ENCODE measurements at regions of chr14 and their contacts with region 1.

Region 1: DNA sequence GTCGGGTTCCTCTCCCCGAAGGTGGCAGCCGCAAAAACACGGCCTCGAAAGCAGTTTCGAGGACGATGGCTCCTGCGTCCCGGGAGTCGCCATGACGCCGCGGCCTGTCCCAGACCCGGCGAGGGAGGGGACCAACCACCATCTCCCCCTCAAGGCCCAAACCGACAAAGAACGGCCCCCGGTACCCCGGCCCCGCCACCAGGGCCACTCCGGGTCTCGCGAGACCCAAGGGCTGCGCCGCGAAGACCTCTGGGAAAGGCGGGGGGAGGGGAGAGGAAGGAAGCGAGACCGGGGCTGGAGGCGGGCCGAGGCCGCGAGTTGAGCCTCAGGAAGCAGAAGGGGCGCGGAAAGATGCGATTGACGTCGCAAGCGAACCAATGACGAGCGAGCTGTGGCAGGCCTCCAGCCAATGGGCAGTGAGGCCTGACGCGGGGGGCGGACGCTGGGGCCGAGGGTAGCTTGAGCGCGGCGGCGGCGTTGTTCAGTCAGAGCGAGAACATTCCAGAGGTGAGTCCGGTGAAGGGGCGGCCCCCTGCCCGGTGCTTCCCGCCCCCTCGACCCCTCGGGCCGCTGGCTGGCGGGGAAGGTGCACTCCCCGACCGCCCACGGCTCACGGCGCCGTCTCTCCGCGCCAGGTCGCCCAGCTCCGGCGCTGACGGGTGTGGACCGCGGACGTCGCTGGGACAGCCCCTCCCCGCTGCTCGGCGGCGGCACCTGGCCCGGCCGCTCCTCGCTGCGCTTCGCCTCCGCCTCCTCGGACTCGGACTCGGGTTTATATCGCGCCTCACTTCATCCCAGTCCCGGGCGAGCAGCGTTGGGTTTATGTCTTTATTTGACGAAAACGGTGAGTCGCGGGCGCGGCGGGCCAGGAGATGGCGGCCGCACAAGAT is at the start of gene EIF5:
- DNase-seq: peak; percentile 98
- ATAC-seq: peak; percentile 84
- H3K4me3 Mint-ChIP-seq: peak within 1 kb of the TSS; percentile 91
- H3K27ac Mint-ChIP-seq: peak within 1 kb of the TSS; percentile 93
- H3K4me1 Mint-ChIP-seq: peaks cover 33% of the 10 kb centered on the region
- H3K27me3 Mint-ChIP-seq: no peaks in the 10 kb centered on the region
- CTCF ChIP-seq: no peak
- total RNA-seq, gene EIF5: 234 and 274 TPM in 2 replicates

Region 2: GRCh38 chr14:102591889-102592763 is 741.9 kb before region 1 on chr14 and contains the start of gene RCOR1:
- CTCF ChIA-PET with region 1: no interaction called
- POLR2A ChIA-PET with region 1: no interaction called
- intact Hi-C with region 1: loop called (anchors 1 kb)
- DNase-seq: peak; percentile 94
- ATAC-seq: peak; percentile 84
- H3K4me3 Mint-ChIP-seq: peak within 1 kb of the TSS; percentile 93
- H3K27ac Mint-ChIP-seq: peak within 1 kb of the TSS; percentile 97
- H3K4me1 Mint-ChIP-seq: peaks cover 26% of the 10 kb centered on the region
- H3K27me3 Mint-ChIP-seq: no peaks in the 10 kb centered on the region
- CTCF ChIP-seq: no peak
- total RNA-seq, gene RCOR1: 21.0 and 23.0 TPM in 2 replicates

Region 3: DNA sequence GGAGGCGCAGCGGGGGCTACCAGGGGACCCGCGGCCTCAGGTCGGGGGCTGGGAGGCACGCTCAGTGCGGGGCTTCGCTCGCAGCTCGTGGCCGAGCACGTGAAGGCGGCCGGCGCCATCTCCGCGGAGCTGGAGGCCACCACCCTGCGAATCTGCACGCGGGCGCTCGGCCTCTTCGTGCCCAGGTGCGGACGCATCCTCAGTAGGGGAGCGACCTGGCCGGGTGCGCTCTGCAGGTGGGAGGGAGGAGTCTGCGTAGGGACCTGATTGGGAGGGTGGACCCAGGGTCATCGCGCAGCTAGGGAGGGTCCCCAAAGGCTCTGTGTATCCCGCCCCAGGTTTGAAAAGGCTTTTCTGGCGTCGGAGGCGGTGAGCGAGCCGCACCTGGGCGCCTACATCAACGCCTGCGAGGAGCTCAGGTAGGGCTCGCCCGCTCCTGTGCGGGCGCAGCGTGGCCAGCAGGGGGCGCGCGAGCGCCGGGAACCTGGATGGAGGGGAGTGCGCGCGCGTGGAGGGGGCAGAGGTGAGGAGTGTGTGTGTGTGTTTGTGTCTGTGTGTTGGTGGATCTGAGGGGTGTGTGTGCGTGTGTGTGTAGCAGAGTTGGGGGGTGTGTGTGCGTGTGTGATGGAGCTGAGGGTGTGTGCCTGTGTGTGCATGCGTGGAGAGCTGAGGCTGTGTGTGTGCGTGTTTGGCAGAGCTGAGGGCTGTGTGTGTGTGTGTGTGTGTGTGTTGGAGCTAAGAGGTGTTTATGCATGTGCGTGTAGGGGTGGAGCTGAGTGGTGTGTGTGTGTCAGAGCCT is 229.1 kb before region 1 on chr14:
- CTCF ChIA-PET with region 1: interaction called, 3 read pairs
- POLR2A ChIA-PET with region 1: interaction called, 3 read pairs
- intact Hi-C with region 1: loop called (anchors 5 kb)
- DNase-seq: peak; percentile 75
- ATAC-seq: peak; percentile 72
- H3K4me3 Mint-ChIP-seq: peak overlapping the region; percentile 11
- H3K27ac Mint-ChIP-seq: peak overlapping the region; percentile 18
- H3K4me1 Mint-ChIP-seq: peaks cover 40% of the 10 kb centered on the region
- H3K27me3 Mint-ChIP-seq: peaks cover 17% of the 10 kb centered on the region
- CTCF ChIP-seq: peak; percentile 50

Region 4: GRCh38 chr14:103385152-103385993 is 51.4 kb after region 1 on chr14 and contains the start of gene MARK3:
- CTCF ChIA-PET with region 1: interaction called, 29 read pairs
- POLR2A ChIA-PET with region 1: interaction called, 28 read pairs
- intact Hi-C with region 1: loop called (anchors 1 kb)
- DNase-seq: peak; percentile 93
- ATAC-seq: peak; percentile 90
- H3K4me3 Mint-ChIP-seq: peak within 1 kb of the TSS; percentile 97
- H3K27ac Mint-ChIP-seq: peak within 1 kb of the TSS; percentile 93
- H3K4me1 Mint-ChIP-seq: peaks cover 45% of the 10 kb centered on the region
- H3K27me3 Mint-ChIP-seq: peaks cover 2% of the 10 kb centered on the region
- CTCF ChIP-seq: no peak
- total RNA-seq, gene MARK3: 97.1 and 110 TPM in 2 replicates

Region 5: DNA sequence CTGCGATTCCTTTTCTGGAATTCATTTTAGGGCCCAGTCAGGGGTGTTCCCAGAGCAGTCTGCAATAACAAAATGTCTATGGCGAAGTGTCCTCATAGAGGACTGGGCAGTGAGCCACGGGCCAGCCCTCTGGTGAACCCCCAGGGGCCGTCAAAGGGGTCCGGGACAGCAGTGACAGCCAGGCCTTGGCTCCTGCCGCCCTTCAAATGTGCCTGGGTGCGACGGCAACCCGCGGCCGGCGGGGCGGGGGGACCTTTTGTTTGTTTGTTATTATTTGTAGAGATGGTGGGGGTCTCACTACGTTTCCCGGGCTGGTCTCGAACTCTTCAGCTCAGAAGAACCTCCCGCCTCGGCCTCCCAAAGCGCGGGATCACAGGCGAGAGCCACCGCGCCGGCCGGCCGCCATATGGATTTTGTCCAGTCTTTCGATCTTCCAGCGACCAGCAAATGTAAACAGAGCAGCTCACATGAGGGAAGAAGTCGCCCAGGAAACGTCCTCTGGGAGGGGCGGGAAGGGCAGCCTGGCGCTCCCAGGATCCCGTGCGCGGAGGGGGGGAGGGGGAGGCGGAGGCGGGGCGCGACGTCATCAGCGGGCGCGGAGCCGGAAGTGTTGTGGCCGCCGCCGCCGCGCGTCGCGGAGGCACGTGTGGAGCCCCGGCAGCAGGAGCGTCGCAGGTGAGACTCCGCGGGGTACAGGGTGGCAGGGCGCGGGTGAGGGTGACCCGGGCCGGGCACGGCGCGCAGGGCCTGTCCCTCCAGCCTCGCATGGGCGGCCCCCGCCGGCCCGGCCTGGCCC is 194.8 kb after region 1 on chr14 and contains the start of gene TRMT61A:
- CTCF ChIA-PET with region 1: no interaction called
- POLR2A ChIA-PET with region 1: interaction called, 4 read pairs
- intact Hi-C with region 1: loop called (anchors 10 kb)
- DNase-seq: peak; percentile 65
- ATAC-seq: peak; percentile 26
- H3K4me3 Mint-ChIP-seq: peak within 1 kb of the TSS; percentile 92
- H3K27ac Mint-ChIP-seq: peak within 1 kb of the TSS; percentile 96
- H3K4me1 Mint-ChIP-seq: peaks cover 62% of the 10 kb centered on the region
- H3K27me3 Mint-ChIP-seq: no peaks in the 10 kb centered on the region
- CTCF ChIP-seq: no peak
- total RNA-seq, gene TRMT61A: 19.4 and 21.8 TPM in 2 replicates